Mucosa of descending colon (tissue), 3 donors: ENCODE measurements at regions of chr6 and their contacts with region 1.

Region 1: GRCh38 chr6:25122001-25122400 is 157.2 kb upstream of the CARMIL1 start:
- DNase-seq: no peak
- ATAC-seq: peak; percentile 24
- H3K4me3 ChIP-seq: no peak overlapping the region
- H3K4me1 ChIP-seq: peaks cover 34% of the 10 kb centered on the region
- CTCF ChIP-seq: no peak

Region 2: DNA sequence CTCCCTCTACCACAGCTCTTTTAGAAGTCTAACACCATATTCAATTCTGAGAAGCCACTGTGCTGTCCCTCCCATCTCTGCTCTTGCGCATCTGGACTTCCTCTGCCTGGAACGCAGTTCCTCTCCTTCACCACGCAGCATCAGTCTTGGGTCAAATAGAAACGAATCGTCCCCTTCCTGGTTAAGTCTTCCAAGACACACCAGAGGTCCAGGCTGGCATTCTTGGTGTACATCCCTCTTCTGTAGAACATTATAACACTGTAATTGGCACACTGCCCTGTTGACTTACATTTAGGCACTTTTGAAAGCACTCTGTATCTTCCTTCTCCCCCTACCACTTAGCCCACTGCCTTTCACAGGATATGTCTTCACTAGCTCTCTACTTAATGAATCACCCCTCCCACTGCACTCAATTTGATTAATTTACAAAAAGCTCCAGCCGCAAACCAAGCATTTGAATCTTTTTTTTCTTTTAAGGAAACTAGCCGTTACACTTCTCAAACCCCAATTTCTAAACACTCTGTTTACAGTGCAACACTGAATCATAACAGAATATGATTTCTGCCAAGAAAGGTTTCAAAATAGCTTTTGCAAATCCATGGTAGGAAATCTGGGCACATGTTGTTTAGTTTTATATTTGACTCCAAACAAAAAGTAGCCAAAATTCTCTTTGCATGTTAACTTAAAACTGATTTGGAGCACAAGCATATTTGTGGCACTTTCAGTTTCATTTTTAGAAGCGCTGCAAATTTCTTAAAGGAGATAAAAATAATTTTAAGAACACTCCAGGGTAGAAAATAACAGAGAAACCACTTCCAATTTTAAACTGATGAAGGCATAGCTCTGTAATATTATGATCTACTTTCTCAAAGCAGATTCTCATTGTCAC is 16.5 kb after region 1 on chr6:
- intact Hi-C with region 1: no loop called
- DNase-seq: peak; percentile 44 to 65 (median 57)
- ATAC-seq: peak; percentile 91
- H3K4me3 ChIP-seq: peak overlapping the region; percentile 6
- H3K4me1 ChIP-seq: peaks cover 14% of the 10 kb centered on the region
- CTCF ChIP-seq: no peak

Region 3: DNA sequence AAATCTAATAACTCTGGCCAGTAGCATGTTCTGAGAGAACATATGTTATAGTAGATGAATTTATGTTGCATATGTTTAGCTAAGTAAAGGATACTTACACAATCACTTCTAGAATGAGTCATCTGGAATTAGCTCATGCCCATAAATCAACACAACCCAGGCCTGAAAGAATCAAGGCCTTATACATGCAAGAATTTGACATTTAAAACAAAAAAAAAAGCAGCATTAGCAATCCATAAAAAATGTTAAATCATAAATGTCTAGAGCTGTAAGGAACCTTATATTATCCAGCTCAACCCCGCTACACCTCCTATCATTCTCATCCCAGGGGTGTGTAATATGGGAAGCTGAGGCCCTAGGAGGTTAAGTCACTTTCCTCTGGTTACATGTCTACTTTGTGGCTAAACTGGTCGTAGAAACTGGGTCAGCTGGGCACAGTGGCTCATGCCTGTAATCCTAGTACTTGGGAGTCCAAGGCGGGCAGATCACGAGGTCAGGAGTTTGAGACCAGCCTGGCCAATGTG is 52.0 kb after region 1 on chr6:
- intact Hi-C with region 1: loop called in 1 of 2 experiments (anchors 10 kb)
- DNase-seq: no peak
- ATAC-seq: peak; percentile 85
- H3K4me3 ChIP-seq: no peak overlapping the region
- H3K4me1 ChIP-seq: peaks cover 14% of the 10 kb centered on the region
- CTCF ChIP-seq: no peak